ENCODE measurements at regions of chr6 and their contacts with region 1.

Region 1: DNA sequence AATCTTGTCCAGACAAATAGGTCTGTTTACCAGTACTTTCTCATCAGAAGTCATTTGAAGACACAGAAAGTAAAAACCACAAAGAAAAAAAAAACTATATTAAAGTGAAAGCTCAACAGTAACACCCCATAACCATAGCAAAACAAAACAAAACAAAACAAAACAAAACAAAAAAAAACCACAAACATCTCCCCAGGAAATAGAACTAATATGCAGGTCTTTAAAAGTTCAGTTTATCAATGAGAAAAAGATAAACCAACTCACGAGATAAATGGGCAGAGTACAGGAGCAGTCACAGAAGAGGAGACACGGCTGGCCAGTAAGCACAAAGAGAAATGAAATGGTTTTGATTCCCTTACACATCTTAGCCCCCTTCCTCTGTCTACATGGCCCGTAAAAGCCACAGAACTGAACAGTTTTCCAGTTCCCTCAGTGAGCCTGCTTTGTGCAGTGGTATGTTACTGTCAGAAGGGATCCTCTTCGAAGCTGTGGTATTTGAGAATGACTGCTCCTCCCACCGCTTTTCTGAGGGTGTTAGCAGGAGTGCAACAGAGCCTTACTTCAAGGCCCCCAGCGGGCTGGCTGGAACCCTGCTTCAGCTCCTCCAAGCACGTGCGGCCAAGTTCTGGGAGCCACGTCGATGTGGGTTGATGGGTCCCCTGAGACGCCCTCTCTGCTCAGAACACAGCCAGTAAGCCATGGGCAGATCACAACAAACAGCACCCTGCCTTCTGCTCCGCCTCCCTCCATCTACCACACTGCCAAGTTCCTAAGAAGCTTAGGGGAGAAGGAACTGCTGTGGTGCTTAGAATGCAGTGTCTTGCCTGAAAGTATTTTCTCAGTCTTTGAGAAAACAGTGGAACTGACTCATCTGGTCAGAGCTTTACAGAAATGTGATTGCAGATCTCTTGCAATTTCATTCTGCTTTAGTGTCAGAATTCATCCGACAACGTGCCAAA is 14.0 kb downstream of the UST start:
- DNase-seq: peak; percentile 49
- CTCF ChIP-seq: no peak

Region 2: GRCh38 chr6:148342357-148343046 is 418.3 kb before region 1 on chr6 and contains the start of gene SASH1:
- CTCF ChIA-PET with region 1: no interaction called
- POLR2A ChIA-PET with region 1: no interaction called
- DNase-seq: peak; percentile 36
- CTCF ChIP-seq: no peak

Region 3: DNA sequence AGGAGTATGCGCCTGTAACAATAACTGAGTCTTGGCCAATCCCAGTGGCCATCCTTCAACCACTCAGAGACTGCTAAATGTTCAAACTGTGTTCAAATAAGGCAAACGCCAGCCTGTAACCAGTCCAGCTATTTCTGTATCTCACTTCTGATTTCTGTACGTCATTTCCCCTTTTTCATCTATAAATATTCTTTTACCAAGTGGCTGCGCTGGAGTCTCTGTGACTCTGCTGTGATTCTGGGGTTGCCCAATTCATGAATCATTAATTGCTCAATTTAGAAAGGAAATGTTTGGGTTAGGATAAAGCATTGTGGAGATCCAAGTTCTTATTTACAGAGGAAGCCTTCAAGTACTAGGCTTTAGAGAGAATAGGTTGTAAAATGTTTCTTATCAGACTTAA is 103.8 kb before region 1 on chr6:
- CTCF ChIA-PET with region 1: no interaction called
- POLR2A ChIA-PET with region 1: no interaction called
- DNase-seq: no peak
- CTCF ChIP-seq: no peak

Region 4: DNA sequence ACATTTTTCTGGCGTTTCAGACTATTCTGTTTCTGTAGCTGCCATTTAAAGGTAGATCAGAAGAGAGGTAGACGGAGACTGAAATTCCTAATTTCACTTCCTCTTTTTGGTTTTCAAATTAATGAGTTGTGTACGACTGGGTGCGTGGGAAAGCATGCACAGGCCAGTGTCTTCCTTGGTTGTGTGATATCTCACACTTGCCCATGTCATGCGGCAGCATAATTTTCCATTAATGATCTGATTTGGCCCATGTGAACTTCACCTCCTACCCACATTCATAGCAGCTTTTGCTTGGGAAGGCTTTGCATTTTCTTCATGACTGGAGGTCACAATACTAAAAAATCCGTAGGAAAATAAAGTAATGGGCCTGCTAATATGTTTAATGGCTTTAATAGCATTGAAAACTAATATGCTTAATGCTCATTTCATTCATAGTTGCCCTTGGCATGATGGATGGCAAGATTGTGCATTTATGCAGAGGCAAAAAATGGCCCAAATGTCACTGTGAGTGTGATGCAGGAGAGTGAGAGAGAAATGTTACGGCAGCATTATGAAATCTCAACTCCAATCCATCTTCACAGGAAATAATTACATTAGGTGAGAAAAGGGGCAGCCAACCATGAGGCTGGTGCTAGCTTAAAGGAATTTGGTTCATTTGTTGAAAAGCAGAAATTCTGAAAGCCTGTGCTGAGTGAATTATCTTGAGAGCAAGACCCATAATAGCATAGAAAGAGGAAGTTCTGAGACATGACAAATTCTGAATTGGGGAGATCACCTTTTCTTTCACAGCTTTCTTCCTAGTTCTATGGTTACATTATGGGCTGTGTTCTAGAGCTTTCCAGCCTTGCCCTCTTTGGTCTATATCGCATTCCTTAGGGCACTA is 83.0 kb before region 1 on chr6:
- CTCF ChIA-PET with region 1: interaction called, 11 read pairs
- POLR2A ChIA-PET with region 1: interaction called, 7 read pairs
- DNase-seq: peak; percentile 62
- CTCF ChIP-seq: no peak

Region 5: GRCh38 chr6:148776321-148777308 is 15.8 kb after region 1 on chr6:
- CTCF ChIA-PET with region 1: interaction called, 15 read pairs
- POLR2A ChIA-PET with region 1: interaction called, 4 read pairs
- DNase-seq: no peak
- CTCF ChIP-seq: no peak